ENCODE measurements at regions of chr5 and their contacts with region 1.

Region 1: GRCh38 chr5:110681109-110681508 is 45.4 kb downstream of the TMEM232 start:
- DNase-seq: no peak
- H3K4me3 ChIP-seq: no peak overlapping the region
- H3K27ac ChIP-seq: no peak overlapping the region
- H3K4me1 ChIP-seq: no peaks in the 10 kb centered on the region
- H3K27me3 ChIP-seq: no peaks in the 10 kb centered on the region
- CTCF ChIP-seq: no peak

Region 2: DNA sequence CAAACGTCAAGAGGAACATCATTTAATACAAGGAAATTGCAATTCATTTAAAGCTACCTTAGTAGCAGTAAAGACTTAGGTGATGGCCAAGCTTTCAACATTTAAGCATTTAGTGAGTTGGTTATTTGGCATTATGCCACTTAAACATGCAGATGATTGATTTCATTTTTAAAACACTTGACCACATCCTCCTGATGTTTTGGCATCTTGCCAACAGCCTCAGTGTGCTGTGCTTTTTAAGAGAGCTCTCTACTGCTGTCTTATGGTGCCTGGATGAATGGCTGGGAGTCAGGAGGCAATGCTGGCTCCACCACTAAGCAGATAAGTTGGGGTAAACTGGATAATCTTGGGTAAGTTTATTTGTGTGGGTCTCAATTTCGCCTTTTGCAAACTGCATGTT is 626.9 kb before region 1 on chr5:
- CTCF ChIA-PET with region 1: interaction called, 10 read pairs
- POLR2A ChIA-PET with region 1: no interaction called
- intact Hi-C with region 1: no loop called
- DNase-seq: no peak
- H3K4me3 ChIP-seq: no peak overlapping the region
- H3K27ac ChIP-seq: no peak overlapping the region
- H3K4me1 ChIP-seq: no peaks in the 10 kb centered on the region
- H3K27me3 ChIP-seq: no peaks in the 10 kb centered on the region
- CTCF ChIP-seq: no peak

Region 3: DNA sequence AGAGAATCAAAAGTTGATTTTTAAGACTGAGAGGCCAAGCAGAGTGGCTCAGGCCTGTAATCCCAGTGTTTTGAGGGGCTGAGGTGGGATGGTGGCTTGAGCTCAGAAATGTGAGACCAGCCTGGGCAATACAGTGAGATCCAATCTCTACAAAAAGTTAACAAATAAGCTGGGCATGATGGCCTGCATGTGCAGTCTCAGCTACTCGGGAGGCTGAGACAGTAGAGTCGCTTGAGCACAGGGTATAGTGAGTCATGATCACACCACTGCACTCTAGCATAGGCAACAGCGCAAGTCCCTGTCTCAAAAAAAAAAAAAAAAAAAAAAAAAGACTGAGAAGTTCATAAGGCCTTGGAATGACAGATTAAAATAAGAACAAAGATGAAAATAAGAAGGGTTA is 131.8 kb before region 1 on chr5:
- CTCF ChIA-PET with region 1: no interaction called
- POLR2A ChIA-PET with region 1: no interaction called
- intact Hi-C with region 1: no loop called
- DNase-seq: no peak
- H3K4me3 ChIP-seq: no peak overlapping the region
- H3K27ac ChIP-seq: no peak overlapping the region
- H3K4me1 ChIP-seq: no peaks in the 10 kb centered on the region
- H3K27me3 ChIP-seq: no peaks in the 10 kb centered on the region
- CTCF ChIP-seq: no peak

Region 4: DNA sequence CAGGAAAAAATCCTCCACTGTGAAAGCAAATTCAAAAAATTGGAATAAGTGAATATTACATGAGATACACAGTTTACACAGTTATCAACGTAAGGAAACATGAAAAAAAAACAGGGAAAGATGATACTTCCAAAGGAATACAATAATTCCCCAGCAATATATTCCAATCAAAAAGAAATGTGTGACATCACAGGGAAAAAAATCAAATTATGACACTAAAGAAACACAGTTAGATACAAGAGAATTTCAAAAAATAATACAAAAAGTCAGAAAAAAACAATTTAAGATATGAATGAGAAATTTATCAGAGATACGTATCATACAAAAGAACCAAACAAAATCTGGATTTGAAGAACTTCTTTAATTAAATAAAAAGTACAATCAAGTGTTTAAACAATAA is 48.9 kb before region 1 on chr5:
- CTCF ChIA-PET with region 1: no interaction called
- POLR2A ChIA-PET with region 1: no interaction called
- intact Hi-C with region 1: loop called (anchors 2 kb)
- DNase-seq: no peak
- H3K4me3 ChIP-seq: no peak overlapping the region
- H3K27ac ChIP-seq: no peak overlapping the region
- H3K4me1 ChIP-seq: no peaks in the 10 kb centered on the region
- H3K27me3 ChIP-seq: no peaks in the 10 kb centered on the region
- CTCF ChIP-seq: no peak

Measured in PC-9 (cell line).